ENCODE measurements at regions of chr1 and their contacts with region 1.

Region 1: DNA sequence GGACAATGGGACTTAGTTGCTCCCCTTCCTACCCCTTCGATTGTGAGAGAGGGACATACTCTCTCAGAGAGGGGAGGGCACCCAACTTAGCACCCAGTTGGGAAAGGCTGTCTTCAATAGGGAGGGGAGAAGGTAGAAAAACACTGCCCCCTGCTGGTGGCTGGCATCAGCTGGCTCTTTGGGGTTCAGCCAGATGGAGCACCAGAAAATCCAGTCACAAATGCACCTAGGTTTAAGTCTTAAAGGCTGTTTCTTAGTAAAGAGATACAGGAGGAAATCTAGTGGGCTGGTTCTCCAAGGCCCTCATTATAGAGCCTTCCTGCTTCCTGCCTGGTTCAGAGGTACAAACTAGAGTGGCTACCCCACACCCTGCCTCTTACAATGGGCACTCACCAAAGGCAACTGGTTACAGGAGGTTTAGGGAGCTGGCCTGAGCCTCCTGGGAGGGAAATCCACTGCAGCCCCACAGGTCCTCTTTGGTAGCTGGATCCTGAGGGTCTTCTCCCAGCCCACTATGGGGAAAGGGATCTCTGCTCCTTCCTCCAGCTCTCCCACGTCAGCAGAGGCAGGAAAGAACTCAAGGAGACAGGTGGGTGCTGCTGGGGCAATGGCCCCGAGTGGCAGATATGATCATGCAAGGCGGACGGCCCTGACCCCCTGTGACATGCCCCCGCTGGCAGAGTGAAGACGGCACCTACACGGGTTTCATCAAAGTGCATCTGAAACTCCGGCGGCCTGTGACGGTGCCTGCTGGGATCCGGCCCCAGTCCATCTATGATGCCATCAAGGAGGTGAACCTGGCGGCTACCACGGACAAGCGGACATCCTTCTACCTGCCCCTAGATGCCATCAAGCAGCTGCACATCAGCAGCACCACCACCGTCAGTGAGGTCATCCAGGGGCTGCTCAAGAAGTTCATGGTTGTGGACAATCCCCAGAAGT is 28.3 kb downstream of the EIF2D start:
- DNase-seq: no peak
- ATAC-seq: peak; percentile 67
- H3K4me3 ChIP-seq: no peak overlapping the region
- H3K27ac ChIP-seq: no peak overlapping the region
- H3K4me1 ChIP-seq: peaks cover 28% of the 10 kb centered on the region
- H3K27me3 ChIP-seq: no peaks in the 10 kb centered on the region
- CTCF ChIP-seq: peak; percentile 82 to 92 (median 90)
- EP300 ChIP-seq: no peak
- POLR2A ChIP-seq: no peak
- RAD21 ChIP-seq: peak; percentile 92

Region 2: GRCh38 chr1:206461602-206462455 is 122.1 kb before region 1 on chr1:
- CTCF ChIA-PET with region 1: interaction called, 16 read pairs
- POLR2A ChIA-PET with region 1: no interaction called
- RAD21 ChIA-PET with region 1: interaction called, 7 read pairs
- SMC1A ChIA-PET with region 1: interaction called, 8 read pairs
- in situ Hi-C with region 1: no loop called
- intact Hi-C with region 1: no loop called
- DNase-seq: no peak
- ATAC-seq: peak; percentile 90
- H3K4me3 ChIP-seq: no peak overlapping the region
- H3K27ac ChIP-seq: no peak overlapping the region
- H3K4me1 ChIP-seq: peaks cover 23% of the 10 kb centered on the region
- H3K27me3 ChIP-seq: no peaks in the 10 kb centered on the region
- CTCF ChIP-seq: peak; percentile 76 to 86 (median 84)
- EP300 ChIP-seq: no peak
- POLR2A ChIP-seq: no peak
- RAD21 ChIP-seq: peak; percentile 73

Region 3: GRCh38 chr1:206479183-206480125 is 104.5 kb before region 1 on chr1:
- CTCF ChIA-PET with region 1: interaction called, 43 read pairs
- POLR2A ChIA-PET with region 1: interaction called, 6 read pairs
- RAD21 ChIA-PET with region 1: interaction called, 14 read pairs
- SMC1A ChIA-PET with region 1: interaction called, 10 read pairs
- in situ Hi-C with region 1: no loop called
- intact Hi-C with region 1: loop called (anchors 2 kb)
- DNase-seq: no peak
- ATAC-seq: peak; percentile 77
- H3K4me3 ChIP-seq: no peak overlapping the region
- H3K27ac ChIP-seq: no peak overlapping the region
- H3K4me1 ChIP-seq: peaks cover 17% of the 10 kb centered on the region
- H3K27me3 ChIP-seq: no peaks in the 10 kb centered on the region
- CTCF ChIP-seq: peak; percentile 77 to 87 (median 84)
- EP300 ChIP-seq: no peak
- POLR2A ChIP-seq: no peak
- RAD21 ChIP-seq: peak; percentile 80

Region 4: DNA sequence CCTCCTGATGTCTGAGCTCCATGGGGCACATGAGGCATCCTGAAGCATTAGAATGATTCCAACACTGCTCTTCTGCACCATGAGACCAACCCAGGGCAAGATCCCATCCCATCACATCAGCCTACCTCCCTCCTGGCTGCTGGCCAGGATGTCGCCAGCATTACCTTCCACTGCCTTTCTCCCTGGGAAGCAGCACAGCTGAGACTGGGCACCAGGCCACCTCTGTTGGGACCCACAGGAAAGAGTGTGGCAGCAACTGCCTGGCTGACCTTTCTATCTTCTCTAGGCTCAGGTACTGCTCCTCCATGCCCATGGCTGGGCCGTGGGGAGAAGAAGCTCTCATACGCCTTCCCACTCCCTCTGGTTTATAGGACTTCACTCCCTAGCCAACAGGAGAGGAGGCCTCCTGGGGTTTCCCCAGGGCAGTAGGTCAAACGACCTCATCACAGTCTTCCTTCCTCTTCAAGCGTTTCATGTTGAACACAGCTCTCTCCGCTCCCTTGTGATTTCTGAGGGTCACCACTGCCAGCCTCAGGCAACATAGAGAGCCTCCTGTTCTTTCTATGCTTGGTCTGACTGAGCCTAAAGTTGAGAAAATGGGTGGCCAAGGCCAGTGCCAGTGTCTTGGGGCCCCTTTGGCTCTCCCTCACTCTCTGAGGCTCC is 87.7 kb before region 1 on chr1:
- CTCF ChIA-PET with region 1: interaction called, 48 read pairs
- POLR2A ChIA-PET with region 1: interaction called, 4 read pairs
- RAD21 ChIA-PET with region 1: interaction called, 26 read pairs
- SMC1A ChIA-PET with region 1: interaction called, 146 read pairs
- in situ Hi-C with region 1: no loop called
- intact Hi-C with region 1: no loop called
- DNase-seq: no peak
- ATAC-seq: peak; percentile 88
- H3K4me3 ChIP-seq: peak overlapping the region; percentile 34; the same call in 1 of the 2 replicates
- H3K27ac ChIP-seq: peak overlapping the region; percentile 90
- H3K4me1 ChIP-seq: peaks cover 39% of the 10 kb centered on the region
- H3K27me3 ChIP-seq: no peaks in the 10 kb centered on the region
- CTCF ChIP-seq: no peak
- EP300 ChIP-seq: 0 out of 4 replicates have a peak, but pooled peaks of 1 of the 2 experiments have one; percentile 29
- POLR2A ChIP-seq: no peak
- RAD21 ChIP-seq: no peak

Region 5: GRCh38 chr1:206521143-206521542 is 62.8 kb before region 1 on chr1:
- CTCF ChIA-PET with region 1: interaction called, 13 read pairs
- POLR2A ChIA-PET with region 1: interaction called, 3 read pairs
- RAD21 ChIA-PET with region 1: interaction called, 4 read pairs
- SMC1A ChIA-PET with region 1: interaction called, 7 read pairs
- in situ Hi-C with region 1: no loop called
- intact Hi-C with region 1: no loop called
- DNase-seq: no peak
- ATAC-seq: no peak
- H3K4me3 ChIP-seq: no peak overlapping the region
- H3K27ac ChIP-seq: no peak overlapping the region
- H3K4me1 ChIP-seq: peaks cover 4% of the 10 kb centered on the region; the same call in 1 of the 2 replicates
- H3K27me3 ChIP-seq: no peaks in the 10 kb centered on the region
- CTCF ChIP-seq: no peak
- EP300 ChIP-seq: no peak
- POLR2A ChIP-seq: no peak
- RAD21 ChIP-seq: no peak

Region 6: GRCh38 chr1:206556750-206557635 is 27.0 kb before region 1 on chr1:
- CTCF ChIA-PET with region 1: interaction called, 330 read pairs
- POLR2A ChIA-PET with region 1: interaction called, 117 read pairs
- RAD21 ChIA-PET with region 1: interaction called, 52 read pairs
- SMC1A ChIA-PET with region 1: interaction called, 476 read pairs
- in situ Hi-C with region 1: no loop called
- intact Hi-C with region 1: loop called (anchors 2 kb)
- DNase-seq: no peak
- ATAC-seq: peak; percentile 76
- H3K4me3 ChIP-seq: peak overlapping the region; percentile 95
- H3K27ac ChIP-seq: peak overlapping the region; percentile 98
- H3K4me1 ChIP-seq: peaks cover 42% of the 10 kb centered on the region
- H3K27me3 ChIP-seq: no peaks in the 10 kb centered on the region
- CTCF ChIP-seq: no peak
- EP300 ChIP-seq: peak in 1 of 2 experiments; percentile 51; a peak in 2 of 4 replicates
- POLR2A ChIP-seq: peak; percentile 90
- RAD21 ChIP-seq: no peak

Measured in GM12878 (cell line).